Transverse colon (tissue), 4 donors: ENCODE measurements at regions of chr4 and their contacts with region 1.

Region 1: DNA sequence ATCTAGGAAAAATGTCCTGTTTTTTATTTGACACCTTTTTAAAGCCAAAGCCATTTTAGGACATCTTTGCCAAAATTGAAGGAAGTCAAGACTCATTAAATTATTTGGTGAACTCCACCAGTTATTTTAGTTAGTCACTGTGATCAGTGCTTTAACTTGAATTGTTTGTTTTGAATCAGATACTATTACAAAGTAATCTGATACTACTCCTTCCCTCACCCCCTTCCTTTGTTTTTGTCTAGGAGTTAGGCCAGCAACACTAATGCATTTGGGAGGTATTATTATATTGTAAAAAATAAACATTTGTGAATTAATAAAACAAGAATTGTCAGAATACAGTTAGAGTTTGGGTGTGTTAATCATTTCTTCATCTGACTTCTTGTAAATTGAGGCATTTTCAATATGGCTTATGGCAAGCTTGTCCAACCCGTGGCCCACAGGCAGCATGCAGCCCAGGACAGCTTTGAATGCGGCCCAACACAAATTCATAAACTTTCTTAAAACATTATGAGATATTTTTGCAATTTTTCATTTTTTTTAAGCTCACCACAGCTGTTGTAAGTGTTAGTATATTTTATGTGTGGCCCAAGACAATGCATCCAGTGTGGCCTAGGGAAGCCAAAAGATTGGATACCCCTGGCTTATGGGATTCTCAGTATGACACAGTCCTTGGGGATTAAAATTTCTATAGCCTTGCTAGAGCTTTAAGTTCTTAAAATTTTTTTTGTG is 182.2 kb downstream of the BMPR1B start:
- DNase-seq: no peak
- H3K4me3 ChIP-seq: no peak overlapping the region
- H3K27ac ChIP-seq: no peak overlapping the region
- H3K4me1 ChIP-seq: no peaks in the 10 kb centered on the region
- H3K27me3 ChIP-seq: no peaks in the 10 kb centered on the region
- CTCF ChIP-seq: no peak
- EP300 ChIP-seq: no peak
- POLR2A ChIP-seq: no peak

Region 2: GRCh38 chr4:93228021-93228420 is 1711.9 kb before region 1 on chr4:
- in situ Hi-C with region 1: no loop called
- intact Hi-C with region 1: no loop called
- DNase-seq: no peak
- H3K4me3 ChIP-seq: no peak overlapping the region
- H3K27ac ChIP-seq: no peak overlapping the region
- H3K4me1 ChIP-seq: no peaks in the 10 kb centered on the region
- H3K27me3 ChIP-seq: no peaks in the 10 kb centered on the region
- CTCF ChIP-seq: no peak
- EP300 ChIP-seq: no peak
- POLR2A ChIP-seq: no peak

Region 3: GRCh38 chr4:94695384-94695783 is 244.6 kb before region 1 on chr4:
- in situ Hi-C with region 1: no loop called
- intact Hi-C with region 1: no loop called
- DNase-seq: no peak
- H3K4me3 ChIP-seq: no peak overlapping the region
- H3K27ac ChIP-seq: no peak overlapping the region
- H3K4me1 ChIP-seq: no peaks in the 10 kb centered on the region
- H3K27me3 ChIP-seq: no peaks in the 10 kb centered on the region
- CTCF ChIP-seq: no peak
- EP300 ChIP-seq: no peak
- POLR2A ChIP-seq: no peak

Region 4: DNA sequence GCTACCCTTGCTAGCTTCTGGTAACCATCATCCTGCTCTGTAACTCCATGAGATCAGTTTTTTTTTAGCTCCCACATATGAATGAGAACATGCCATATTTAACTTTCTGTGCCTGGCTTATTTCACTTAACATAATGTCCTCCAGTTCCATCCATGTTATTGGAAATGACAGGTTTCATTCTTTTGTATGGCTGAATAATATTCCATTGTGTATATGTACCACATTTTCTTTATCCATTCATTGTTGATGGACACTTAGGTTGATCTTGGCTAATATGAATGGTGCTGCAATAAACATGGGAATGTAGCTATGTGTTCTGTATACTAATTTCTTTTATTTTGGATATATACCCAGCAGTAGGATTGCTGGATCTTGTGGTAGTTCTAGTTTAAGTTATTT is 22.5 kb after region 1 on chr4:
- in situ Hi-C with region 1: no loop called
- intact Hi-C with region 1: loop called (anchors 1 kb)
- DNase-seq: no peak
- H3K4me3 ChIP-seq: no peak overlapping the region
- H3K27ac ChIP-seq: no peak overlapping the region
- H3K4me1 ChIP-seq: no peaks in the 10 kb centered on the region
- H3K27me3 ChIP-seq: no peaks in the 10 kb centered on the region
- CTCF ChIP-seq: no peak
- EP300 ChIP-seq: no peak
- POLR2A ChIP-seq: no peak